GM12878 (cell line): ENCODE measurements at regions of chr2 and their contacts with region 1.

Region 1: DNA sequence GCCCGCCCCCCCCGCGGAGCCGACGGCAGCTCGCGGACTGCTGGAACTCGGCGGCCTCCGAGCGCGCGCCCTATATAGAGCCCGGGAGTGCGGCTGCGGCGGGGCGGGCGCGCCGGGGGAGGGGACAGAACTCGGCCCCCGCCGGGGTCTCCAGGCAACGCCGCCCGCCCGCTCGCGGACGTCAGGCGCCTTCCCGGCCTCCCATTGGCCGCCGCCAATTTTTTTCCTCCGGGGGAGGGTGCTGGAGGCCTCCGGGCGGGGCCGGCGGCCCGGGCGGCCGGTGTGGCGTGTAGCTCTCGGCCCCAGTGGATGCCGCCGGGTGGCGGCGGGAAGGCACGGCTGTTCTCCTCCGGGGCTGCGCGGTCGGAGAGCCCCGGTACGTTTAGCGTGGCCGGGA is at the start of gene ZFP36L2:
- DNase-seq: no peak
- ATAC-seq: peak; percentile 69
- H3K4me3 ChIP-seq: peak within 1 kb of the TSS; percentile 84
- H3K27ac ChIP-seq: peak within 1 kb of the TSS; percentile 97
- H3K4me1 ChIP-seq: peaks cover 22% of the 10 kb centered on the region
- H3K27me3 ChIP-seq: no peaks in the 10 kb centered on the region
- CTCF ChIP-seq: no peak
- EP300 ChIP-seq: peak in 1 of 2 experiments; percentile 40; a peak in 1 of 4 replicates
- POLR2A ChIP-seq: no peak
- RAD21 ChIP-seq: no peak
- polyA plus RNA-seq, gene ZFP36L2: 25.5 to 43.3 TPM

Region 2: DNA sequence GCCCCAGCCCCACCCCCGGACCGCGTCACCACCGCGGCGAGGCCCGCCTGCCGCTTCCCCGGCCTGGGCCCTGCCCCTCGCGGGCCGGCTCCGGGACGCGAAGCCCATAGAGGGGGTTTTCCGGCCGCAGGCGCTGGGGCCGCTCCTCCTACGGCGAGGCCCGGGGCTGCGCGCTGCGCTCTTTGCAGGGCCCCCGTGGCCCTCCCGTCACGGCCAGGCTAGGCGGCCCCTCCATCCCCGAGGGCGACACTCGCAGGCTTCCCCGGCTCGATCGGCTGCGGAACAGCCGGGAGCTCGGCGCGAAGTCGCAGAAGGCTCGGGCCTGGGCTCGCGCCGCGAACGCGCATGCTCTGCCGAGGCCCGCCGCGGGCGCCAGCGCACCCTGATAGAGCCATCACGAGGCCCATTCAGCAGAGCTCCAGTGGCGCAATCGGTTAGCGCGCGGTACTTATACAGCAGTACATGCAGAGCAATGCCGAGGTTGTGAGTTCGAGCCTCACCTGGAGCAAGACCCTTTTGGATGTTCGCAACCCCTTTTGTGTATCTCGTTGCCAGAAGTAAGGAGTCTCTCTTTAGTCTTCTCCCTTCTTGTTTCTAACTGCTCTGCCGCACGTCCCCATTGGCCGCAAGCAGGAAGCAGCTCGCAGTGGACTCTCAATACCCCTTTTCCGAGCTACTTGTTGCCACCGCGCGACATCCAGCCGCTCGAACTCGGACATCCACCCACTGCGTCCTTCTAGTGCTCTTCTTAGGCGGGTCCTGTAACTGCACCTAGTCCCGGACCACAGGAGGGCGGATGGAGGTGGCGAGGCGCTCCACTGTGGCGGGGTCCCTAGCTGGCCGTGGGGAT is 416.2 kb before region 1 on chr2:
- CTCF ChIA-PET with region 1: no interaction called
- POLR2A ChIA-PET with region 1: interaction called, 6 read pairs
- RAD21 ChIA-PET with region 1: interaction called, 5 read pairs
- SMC1A ChIA-PET with region 1: interaction called, 3 read pairs
- in situ Hi-C with region 1: no loop called
- intact Hi-C with region 1: loop called (anchors 5 kb)
- DNase-seq: peak; percentile 95
- ATAC-seq: peak; percentile 84
- H3K4me3 ChIP-seq: peak overlapping the region; percentile 68
- H3K27ac ChIP-seq: peak overlapping the region; percentile 97
- H3K4me1 ChIP-seq: peaks cover 9% of the 10 kb centered on the region
- H3K27me3 ChIP-seq: no peaks in the 10 kb centered on the region
- CTCF ChIP-seq: 0 out of 6 replicates have a peak, but pooled peaks of 1 of the 3 experiments have one; percentile 3
- EP300 ChIP-seq: peak; percentile 18 to 88; a peak in 1 of 4 replicates
- POLR2A ChIP-seq: peak; percentile 90
- RAD21 ChIP-seq: no peak

Region 3: DNA sequence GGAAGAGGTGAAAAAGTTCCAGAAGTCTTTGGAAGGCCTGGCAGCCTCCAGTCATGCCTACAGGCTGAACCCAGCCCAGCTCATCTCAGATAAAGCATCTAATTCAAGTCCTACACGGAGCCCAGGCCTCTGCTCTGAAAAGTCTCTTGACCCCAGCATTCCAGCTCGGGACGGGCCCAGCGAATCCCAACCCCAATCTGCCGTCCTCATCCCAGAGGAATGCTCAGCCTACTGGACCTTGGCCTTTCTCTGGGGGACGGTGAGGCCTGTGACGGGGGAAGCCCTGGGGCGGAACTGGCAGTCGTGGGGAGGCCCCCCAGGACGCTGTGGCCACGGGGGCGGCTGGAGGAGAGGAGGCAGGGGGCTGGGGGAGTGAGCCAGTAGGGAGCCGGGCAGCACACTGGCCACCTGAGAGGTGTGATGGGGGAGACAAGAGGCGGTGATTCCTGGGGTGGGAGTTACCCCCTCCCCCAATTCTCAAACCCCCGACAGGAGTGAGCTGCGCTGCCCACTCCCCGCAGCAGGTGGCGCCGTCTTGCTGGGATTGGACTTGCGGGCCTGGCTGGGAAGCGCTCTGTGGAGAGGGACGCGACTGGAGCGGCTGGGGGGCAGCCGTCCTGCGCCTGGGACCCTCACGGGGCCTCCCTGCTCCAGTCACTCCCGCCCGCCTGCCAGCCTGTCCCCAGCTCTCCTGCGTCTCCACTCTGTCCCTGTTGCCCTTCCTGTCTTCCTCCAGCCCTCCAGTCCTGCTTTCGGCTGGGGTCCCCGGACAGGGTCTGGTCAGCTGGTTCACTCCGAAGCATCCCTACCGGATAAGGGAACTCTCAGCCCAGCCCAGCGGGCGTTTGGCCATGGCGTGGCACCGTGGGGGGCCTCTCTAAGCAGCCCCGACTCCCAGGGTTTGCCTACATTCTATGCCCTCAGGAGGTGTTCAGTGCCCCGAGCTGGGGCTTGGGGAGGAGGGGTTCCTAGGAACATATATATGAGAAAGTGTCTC is 251.5 kb before region 1 on chr2:
- CTCF ChIA-PET with region 1: interaction called, 61 read pairs
- POLR2A ChIA-PET with region 1: interaction called, 3 read pairs
- RAD21 ChIA-PET with region 1: interaction called, 40 read pairs
- SMC1A ChIA-PET with region 1: interaction called, 36 read pairs
- in situ Hi-C with region 1: no loop called
- intact Hi-C with region 1: loop called (anchors 1 kb)
- DNase-seq: no peak
- ATAC-seq: peak; percentile 67
- H3K4me3 ChIP-seq: no peak overlapping the region
- H3K27ac ChIP-seq: no peak overlapping the region
- H3K4me1 ChIP-seq: peaks cover 14% of the 10 kb centered on the region
- H3K27me3 ChIP-seq: peaks cover 0 to 1% of the 10 kb centered on the region in 2 experiments; a peak in 1 of 4 replicates
- CTCF ChIP-seq: peak; percentile 56 to 88 (median 83)
- EP300 ChIP-seq: no peak
- POLR2A ChIP-seq: no peak
- RAD21 ChIP-seq: peak; percentile 77

Region 4: DNA sequence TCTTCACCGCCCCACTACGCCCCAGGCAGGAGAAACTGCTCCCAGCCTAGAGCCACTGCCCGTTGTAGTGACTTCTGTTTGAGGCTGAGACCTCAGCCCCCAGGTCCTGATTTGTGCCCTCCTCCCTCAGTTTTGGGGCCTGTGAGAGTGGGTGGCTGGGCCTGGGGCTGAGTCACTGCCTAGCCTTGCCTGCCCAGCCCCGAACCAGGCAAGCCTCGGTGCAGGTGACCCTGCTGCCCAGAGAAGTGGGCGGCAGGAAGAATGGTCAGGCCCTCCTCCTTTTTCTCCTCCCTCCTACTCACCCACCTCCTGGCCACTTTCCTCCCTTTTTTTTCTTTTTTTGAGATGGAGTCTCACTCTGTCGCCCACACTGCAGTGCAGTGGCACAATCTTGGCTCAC is 66.8 kb before region 1 on chr2:
- CTCF ChIA-PET with region 1: interaction called, 8 read pairs
- POLR2A ChIA-PET with region 1: interaction called, 5 read pairs
- RAD21 ChIA-PET with region 1: interaction called, 10 read pairs
- SMC1A ChIA-PET with region 1: interaction called, 9 read pairs
- in situ Hi-C with region 1: no loop called
- intact Hi-C with region 1: no loop called
- DNase-seq: no peak
- ATAC-seq: no peak
- H3K4me3 ChIP-seq: no peak overlapping the region
- H3K27ac ChIP-seq: no peak overlapping the region
- H3K4me1 ChIP-seq: peaks cover 23% of the 10 kb centered on the region
- H3K27me3 ChIP-seq: no peaks in the 10 kb centered on the region
- CTCF ChIP-seq: no peak
- EP300 ChIP-seq: no peak
- POLR2A ChIP-seq: no peak
- RAD21 ChIP-seq: no peak

Region 5: DNA sequence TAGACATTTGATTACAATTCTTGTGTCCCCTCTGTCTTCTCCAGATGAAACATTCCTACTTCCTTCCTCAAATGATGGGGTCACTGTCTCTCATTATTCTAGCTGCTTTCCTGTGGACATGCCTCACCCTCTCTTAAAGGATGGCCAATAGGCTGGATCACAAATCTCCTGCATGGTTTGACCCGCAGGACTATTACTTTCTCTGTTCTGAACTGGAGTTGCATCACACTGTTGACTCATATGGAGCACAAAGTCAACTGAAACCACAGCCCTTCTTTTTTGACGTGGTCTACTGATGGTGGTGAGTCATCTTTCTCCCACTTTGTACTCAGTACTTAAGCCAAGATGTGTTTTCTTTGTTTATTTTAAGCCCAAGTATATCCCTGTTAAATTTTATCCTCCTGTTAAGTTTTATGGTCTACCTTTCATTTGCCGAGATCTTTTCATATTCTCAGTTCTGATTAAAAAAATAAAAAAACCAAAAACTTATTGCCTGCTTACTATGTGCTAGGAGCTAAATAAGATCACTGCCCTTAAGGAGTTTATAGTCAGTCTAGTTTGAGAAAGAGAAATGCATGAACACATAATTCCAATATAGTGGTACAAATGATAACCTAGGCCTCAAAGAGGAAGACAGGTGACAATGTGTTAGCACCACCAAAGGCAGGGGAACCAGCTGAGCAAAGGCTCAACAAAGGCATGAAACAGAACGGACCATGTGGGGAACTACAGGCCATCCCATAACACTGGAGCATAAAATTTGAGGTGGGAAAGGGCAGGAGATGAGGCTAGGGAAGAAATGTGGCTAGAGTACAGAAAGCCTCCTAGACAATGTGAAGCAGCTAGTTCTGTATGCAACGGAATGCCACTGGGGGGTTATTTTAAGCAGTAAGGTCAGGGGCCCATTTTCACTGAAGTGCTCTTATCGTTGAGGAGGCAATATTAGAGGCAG is 67.5 kb after region 1 on chr2:
- CTCF ChIA-PET with region 1: interaction called, 4 read pairs
- POLR2A ChIA-PET with region 1: no interaction called
- RAD21 ChIA-PET with region 1: no interaction called
- SMC1A ChIA-PET with region 1: interaction called, 11 read pairs
- in situ Hi-C with region 1: no loop called
- intact Hi-C with region 1: no loop called
- DNase-seq: peak; percentile 90
- ATAC-seq: peak; percentile 98
- H3K4me3 ChIP-seq: peak overlapping the region; percentile 6; the same call in 1 of the 2 replicates
- H3K27ac ChIP-seq: peak overlapping the region; percentile 78
- H3K4me1 ChIP-seq: peaks cover 21% of the 10 kb centered on the region
- H3K27me3 ChIP-seq: no peaks in the 10 kb centered on the region
- CTCF ChIP-seq: no peak
- EP300 ChIP-seq: peak; percentile 87 to 88; a peak in 3 of 4 replicates
- POLR2A ChIP-seq: no peak
- RAD21 ChIP-seq: 0 out of 2 replicates have a peak, but pooled peaks have one; percentile 5

Region 6: DNA sequence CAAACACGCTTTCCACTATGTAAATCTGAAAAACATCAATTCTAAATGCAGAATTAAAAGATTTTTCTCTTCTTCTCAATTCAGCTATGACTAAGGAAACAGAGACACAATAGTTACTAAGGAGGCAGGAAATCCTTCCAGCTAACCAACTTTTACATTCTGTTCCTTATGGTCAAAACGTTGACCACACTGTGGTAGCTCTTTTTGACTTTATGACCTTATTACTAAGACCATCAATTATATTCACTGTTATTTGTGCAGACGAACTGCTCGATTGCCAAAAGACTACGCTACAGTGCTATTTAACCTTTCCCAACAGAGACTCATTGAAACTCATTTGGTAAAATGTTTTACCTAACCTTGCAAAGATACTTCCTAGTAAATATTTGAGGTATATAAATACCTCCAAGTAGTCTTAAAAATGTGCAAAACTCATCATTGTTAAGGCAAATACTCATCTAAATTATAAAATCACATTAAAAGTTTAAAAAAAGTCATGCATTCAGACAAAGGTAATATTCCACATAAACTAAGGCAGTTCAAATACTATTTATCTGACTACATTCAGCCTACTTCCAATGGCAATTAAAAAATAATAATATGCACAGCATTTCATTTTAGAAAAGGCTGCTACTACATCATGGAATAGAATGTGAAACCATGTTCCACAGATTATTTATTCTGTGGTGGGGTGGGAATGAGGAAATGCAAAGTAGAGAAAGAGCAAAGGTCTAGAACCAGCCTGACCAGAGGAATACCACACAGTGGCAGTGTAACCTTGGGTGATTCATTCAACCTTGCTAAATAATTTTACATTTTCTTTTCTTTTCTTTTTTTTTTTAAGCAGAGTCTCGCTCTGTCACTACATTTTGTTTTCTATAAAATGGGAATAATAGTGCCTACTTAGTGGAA is 229.4 kb after region 1 on chr2:
- CTCF ChIA-PET with region 1: interaction called, 9 read pairs
- POLR2A ChIA-PET with region 1: no interaction called
- RAD21 ChIA-PET with region 1: interaction called, 11 read pairs
- SMC1A ChIA-PET with region 1: interaction called, 3 read pairs
- in situ Hi-C with region 1: no loop called
- intact Hi-C with region 1: no loop called
- DNase-seq: peak; percentile 35
- ATAC-seq: peak; percentile 75
- H3K4me3 ChIP-seq: no peak overlapping the region
- H3K27ac ChIP-seq: peak overlapping the region; percentile 1; the same call in 1 of the 2 replicates
- H3K4me1 ChIP-seq: peaks cover 35% of the 10 kb centered on the region
- H3K27me3 ChIP-seq: no peaks in the 10 kb centered on the region
- CTCF ChIP-seq: peak; percentile 5 to 26 (median 21); a peak in 3 of 6 replicates
- EP300 ChIP-seq: peak in 1 of 2 experiments; percentile 36; a peak in 1 of 4 replicates
- POLR2A ChIP-seq: no peak
- RAD21 ChIP-seq: 0 out of 2 replicates have a peak, but pooled peaks have one; percentile 9

Region 7: DNA sequence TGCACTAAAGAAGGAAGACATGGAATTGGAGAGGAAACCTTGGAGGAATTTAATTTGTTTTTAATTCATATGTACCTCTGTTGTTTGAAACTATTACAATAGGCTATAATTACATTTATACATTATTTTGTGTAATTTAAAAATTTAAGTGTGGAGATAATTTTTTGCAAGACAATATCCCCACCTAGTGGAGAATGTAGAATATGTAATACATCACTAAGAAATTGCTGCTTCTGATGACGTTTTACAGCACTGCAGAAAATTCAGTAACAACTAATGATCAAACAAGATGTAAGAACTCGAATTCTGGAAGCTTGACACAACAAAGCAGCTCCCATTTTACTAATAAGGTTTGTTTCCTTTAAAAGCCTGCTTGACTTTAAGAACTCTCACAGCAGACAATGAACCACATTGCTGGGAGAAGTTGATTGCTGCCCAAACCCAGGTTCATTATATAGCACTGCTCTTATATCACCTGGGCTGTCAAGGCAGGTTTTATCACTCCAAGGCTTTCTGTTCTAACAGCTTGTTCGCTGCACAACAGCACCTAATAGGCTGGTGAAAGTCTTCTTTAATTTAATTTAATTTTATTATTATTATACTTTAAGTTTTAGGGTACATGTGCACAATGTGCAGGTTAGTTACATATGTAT is 315.9 kb after region 1 on chr2:
- CTCF ChIA-PET with region 1: interaction called, 26 read pairs
- POLR2A ChIA-PET with region 1: no interaction called
- RAD21 ChIA-PET with region 1: interaction called, 12 read pairs
- SMC1A ChIA-PET with region 1: interaction called, 21 read pairs
- in situ Hi-C with region 1: no loop called
- intact Hi-C with region 1: loop called (anchors 5 kb)
- DNase-seq: no peak
- ATAC-seq: peak; percentile 76
- H3K4me3 ChIP-seq: no peak overlapping the region
- H3K27ac ChIP-seq: no peak overlapping the region
- H3K4me1 ChIP-seq: no peaks in the 10 kb centered on the region
- H3K27me3 ChIP-seq: no peaks in the 10 kb centered on the region
- CTCF ChIP-seq: peak; percentile 36 to 58 (median 45); a peak in 3 of 6 replicates
- EP300 ChIP-seq: no peak
- POLR2A ChIP-seq: no peak
- RAD21 ChIP-seq: peak; percentile 61

Region 8: GRCh38 chr2:43634604-43635306 is 408.2 kb after region 1 on chr2:
- CTCF ChIA-PET with region 1: no interaction called
- POLR2A ChIA-PET with region 1: no interaction called
- RAD21 ChIA-PET with region 1: no interaction called
- SMC1A ChIA-PET with region 1: no interaction called
- in situ Hi-C with region 1: no loop called
- intact Hi-C with region 1: no loop called
- DNase-seq: no peak
- ATAC-seq: no peak
- H3K4me3 ChIP-seq: no peak overlapping the region
- H3K27ac ChIP-seq: no peak overlapping the region
- H3K4me1 ChIP-seq: no peaks in the 10 kb centered on the region
- H3K27me3 ChIP-seq: peaks cover 0 to 10% of the 10 kb centered on the region in 2 experiments
- CTCF ChIP-seq: no peak
- EP300 ChIP-seq: no peak
- POLR2A ChIP-seq: no peak
- RAD21 ChIP-seq: no peak